ENCODE measurements at regions of chr2 and their contacts with region 1.

Region 1: GRCh38 chr2:210195101-210195852 is 24.1 kb upstream of the KANSL1L start:
- DNase-seq: no peak
- H3K4me3 ChIP-seq: peak overlapping the region; percentile 14; the same call in 1 of the 2 replicates
- H3K27ac ChIP-seq: no peak overlapping the region
- H3K27me3 ChIP-seq: no peaks in the 10 kb centered on the region
- CTCF ChIP-seq: peak; percentile 64

Region 2: DNA sequence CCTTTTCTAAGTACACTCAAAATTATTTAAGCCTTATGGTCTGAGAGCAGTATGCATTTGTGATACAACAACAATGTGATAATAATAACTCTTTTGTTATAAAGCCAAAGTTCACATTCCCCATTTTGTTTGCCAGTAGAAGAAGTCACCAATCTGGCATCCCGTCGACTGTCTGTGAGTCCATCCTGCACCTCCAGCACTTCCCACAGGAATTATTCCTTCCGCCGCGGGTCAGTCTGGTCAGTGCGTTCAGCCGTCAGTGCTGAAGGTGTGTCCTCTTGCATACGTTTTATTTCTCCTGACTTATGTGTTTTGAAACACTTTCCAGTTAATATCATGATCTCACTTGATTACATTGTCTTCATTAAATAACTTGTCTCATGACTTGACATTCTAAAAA is 273.2 kb before region 1 on chr2:
- CTCF ChIA-PET with region 1: no interaction called
- POLR2A ChIA-PET with region 1: no interaction called
- DNase-seq: no peak
- H3K4me3 ChIP-seq: no peak overlapping the region
- H3K27ac ChIP-seq: no peak overlapping the region
- H3K27me3 ChIP-seq: no peaks in the 10 kb centered on the region
- CTCF ChIP-seq: no peak

Region 3: GRCh38 chr2:209960676-209961630 is 234.3 kb before region 1 on chr2:
- CTCF ChIA-PET with region 1: interaction called, 17 read pairs
- POLR2A ChIA-PET with region 1: no interaction called
- DNase-seq: no peak
- H3K4me3 ChIP-seq: no peak overlapping the region
- H3K27ac ChIP-seq: no peak overlapping the region
- H3K27me3 ChIP-seq: no peaks in the 10 kb centered on the region
- CTCF ChIP-seq: peak; percentile 70

Region 4: GRCh38 chr2:210072922-210073509 is 122.3 kb before region 1 on chr2:
- CTCF ChIA-PET with region 1: interaction called, 21 read pairs
- POLR2A ChIA-PET with region 1: no interaction called
- DNase-seq: peak; percentile 15
- H3K4me3 ChIP-seq: no peak overlapping the region
- H3K27ac ChIP-seq: no peak overlapping the region
- H3K27me3 ChIP-seq: no peaks in the 10 kb centered on the region
- CTCF ChIP-seq: peak; percentile 79

Region 5: GRCh38 chr2:210207929-210208328 is 12.7 kb after region 1 on chr2:
- CTCF ChIA-PET with region 1: interaction called, 13 read pairs
- POLR2A ChIA-PET with region 1: no interaction called
- DNase-seq: no peak
- H3K4me3 ChIP-seq: no peak overlapping the region
- H3K27ac ChIP-seq: no peak overlapping the region
- H3K27me3 ChIP-seq: no peaks in the 10 kb centered on the region
- CTCF ChIP-seq: no peak

Region 6: GRCh38 chr2:210267698-210268097 is 72.4 kb after region 1 on chr2:
- CTCF ChIA-PET with region 1: no interaction called
- POLR2A ChIA-PET with region 1: no interaction called
- DNase-seq: no peak
- H3K4me3 ChIP-seq: no peak overlapping the region
- H3K27ac ChIP-seq: no peak overlapping the region
- H3K27me3 ChIP-seq: no peaks in the 10 kb centered on the region
- CTCF ChIP-seq: no peak

Region 7: DNA sequence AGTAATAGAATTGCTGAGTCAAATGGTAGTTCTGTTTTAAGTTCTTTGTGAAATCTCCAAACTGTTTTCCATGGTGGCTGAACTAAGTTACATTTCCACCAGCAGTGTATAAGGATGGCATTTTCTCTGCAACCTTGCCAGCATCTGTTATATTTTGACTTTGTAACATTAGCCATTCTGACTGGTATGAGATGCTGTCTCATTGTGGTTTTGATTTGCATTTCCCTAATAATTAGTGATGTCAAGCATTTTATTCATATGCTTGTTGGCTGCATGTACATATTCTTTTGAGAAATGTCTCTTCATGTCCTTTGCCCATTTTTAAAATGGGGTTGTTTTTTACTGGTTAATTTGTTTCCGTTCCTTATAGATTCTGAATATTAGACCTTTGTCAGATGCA is 217.4 kb after region 1 on chr2:
- CTCF ChIA-PET with region 1: no interaction called
- POLR2A ChIA-PET with region 1: no interaction called
- DNase-seq: no peak
- H3K4me3 ChIP-seq: no peak overlapping the region
- H3K27ac ChIP-seq: no peak overlapping the region
- H3K27me3 ChIP-seq: no peaks in the 10 kb centered on the region
- CTCF ChIP-seq: no peak

Region 8: GRCh38 chr2:210626849-210627248 is 431.6 kb after region 1 on chr2:
- CTCF ChIA-PET with region 1: no interaction called
- POLR2A ChIA-PET with region 1: no interaction called
- DNase-seq: no peak
- H3K4me3 ChIP-seq: no peak overlapping the region
- H3K27ac ChIP-seq: no peak overlapping the region
- H3K27me3 ChIP-seq: no peaks in the 10 kb centered on the region
- CTCF ChIP-seq: no peak